Activated CD4-positive, alpha-beta T cell treated with anti-CD3 and anti-CD28 coated beads, Interleukin-2, amount 10 ng/mL, durations not matched to agents 24 days and 14 days (primary cell): ENCODE measurements at regions of chr15 and their contacts with region 1.

Region 1: DNA sequence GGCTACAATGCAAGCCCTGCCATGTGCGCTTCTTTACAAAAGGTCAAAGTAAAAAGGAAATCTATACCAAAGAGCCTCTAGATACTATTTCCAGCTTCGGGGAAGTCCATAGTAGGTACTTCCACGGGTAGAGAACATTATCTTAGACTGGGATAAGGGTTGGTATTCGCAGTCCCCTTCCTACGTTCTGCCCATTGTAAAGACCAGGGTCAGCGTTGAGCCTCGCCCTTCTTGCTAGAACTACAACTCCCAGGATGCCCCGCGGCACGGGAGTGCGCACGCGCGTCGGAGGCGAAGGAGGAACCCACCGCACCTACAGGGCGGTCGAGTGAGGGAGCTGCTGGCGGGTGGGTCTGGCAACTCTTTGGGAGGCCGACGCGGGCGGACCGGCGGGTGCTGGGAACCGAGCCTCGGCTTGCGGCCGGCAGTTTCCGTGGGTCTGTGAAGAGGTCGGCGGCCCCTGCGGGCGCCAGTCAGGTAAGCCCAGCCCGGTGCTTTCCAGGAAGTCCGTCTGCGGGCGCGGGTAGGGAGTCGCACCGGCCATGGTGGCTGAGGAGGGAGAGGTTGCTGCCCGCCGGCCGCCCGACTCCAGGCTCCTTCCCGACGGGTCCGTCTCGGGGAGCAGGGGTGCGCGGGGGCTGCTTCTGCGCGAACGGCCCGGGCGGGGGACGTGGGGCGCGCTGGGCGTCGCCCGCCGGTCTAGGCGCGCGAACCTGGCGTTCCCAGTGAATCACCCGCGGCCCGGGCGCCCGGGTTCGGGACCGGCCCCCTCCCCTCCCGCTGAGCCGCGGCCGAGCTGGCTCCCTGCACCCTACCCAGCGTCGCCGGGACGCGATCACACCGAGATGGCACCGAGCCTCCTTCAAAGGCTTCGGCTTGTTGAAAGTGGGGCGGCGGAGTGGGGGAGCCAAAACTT is at the start of gene TMOD3:
- DNase-seq: peak; percentile 97
- H3K4me3 Mint-ChIP-seq: peak within 1 kb of the TSS; percentile 98
- H3K27ac Mint-ChIP-seq: peak within 1 kb of the TSS; percentile 96
- H3K4me1 Mint-ChIP-seq: peaks cover 36% of the 10 kb centered on the region
- H3K27me3 Mint-ChIP-seq: peaks cover 22% of the 10 kb centered on the region
- total RNA-seq, gene TMOD3: 60.8 and 66.6 TPM in 2 replicates

Region 2: DNA sequence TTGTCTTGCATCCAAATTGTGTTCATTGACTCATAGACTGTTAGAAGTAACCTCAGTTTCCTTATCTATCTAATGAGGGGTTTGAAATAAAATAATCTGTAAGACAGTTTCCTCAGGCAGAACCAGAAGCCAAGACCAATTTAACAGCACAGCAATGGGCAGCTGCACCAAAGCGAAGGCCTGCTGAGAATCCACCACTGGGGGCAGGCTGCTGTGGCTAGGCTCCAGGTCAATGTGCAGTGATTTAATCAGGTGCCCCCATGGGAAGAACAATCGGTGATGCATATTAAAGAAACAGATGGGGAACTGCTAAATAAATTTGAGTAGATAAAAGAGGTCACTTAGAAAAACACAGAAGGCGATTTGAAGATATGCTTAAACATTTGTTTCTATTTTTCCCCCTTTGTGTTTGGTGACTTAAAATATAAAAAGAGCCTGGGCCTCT is 28.2 kb before region 1 on chr15:
- intact Hi-C with region 1: no loop called
- DNase-seq: no peak
- H3K4me3 Mint-ChIP-seq: no peak overlapping the region
- H3K27ac Mint-ChIP-seq: no peak overlapping the region
- H3K4me1 Mint-ChIP-seq: peaks cover 4% of the 10 kb centered on the region
- H3K27me3 Mint-ChIP-seq: no peaks in the 10 kb centered on the region

Region 3: DNA sequence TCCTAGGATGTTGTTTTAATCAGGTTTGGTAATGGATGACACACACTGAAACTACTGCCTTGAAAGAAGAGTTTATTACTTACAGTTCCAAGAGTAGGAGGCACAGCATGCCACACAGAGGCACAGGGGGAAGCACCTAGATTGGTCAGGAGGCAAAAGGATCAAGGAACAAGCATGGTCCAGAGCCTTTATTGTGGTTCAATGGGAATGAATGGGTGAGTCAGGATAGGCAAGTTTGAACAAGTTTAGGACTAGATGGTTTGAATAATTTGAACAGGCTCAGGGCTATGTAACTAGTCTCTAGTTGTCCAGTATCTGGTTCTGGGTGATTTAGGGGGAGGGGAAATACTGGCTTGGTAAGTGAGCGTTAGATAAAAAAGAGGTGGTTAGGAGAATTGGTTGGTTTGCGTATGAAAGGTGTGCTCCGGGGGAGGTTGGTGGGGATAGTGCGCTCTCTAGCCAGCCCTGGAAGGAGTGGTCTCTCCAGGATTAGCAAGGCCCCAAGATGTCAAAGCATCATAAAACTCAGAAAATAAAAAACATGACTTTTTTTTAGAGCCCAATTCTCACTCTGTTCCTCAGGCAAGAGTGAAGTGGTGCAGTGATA is 34.9 kb after region 1 on chr15:
- intact Hi-C with region 1: loop called (anchors 1 kb)
- DNase-seq: no peak
- H3K4me3 Mint-ChIP-seq: peak overlapping the region; percentile 2
- H3K27ac Mint-ChIP-seq: peak overlapping the region; percentile 82
- H3K4me1 Mint-ChIP-seq: peaks cover 47% of the 10 kb centered on the region
- H3K27me3 Mint-ChIP-seq: no peaks in the 10 kb centered on the region

Region 4: GRCh38 chr15:52005748-52006701 is 176.4 kb after region 1 on chr15:
- intact Hi-C with region 1: loop called (anchors 5 kb)
- DNase-seq: peak; percentile 73
- H3K4me3 Mint-ChIP-seq: peak overlapping the region; percentile 51
- H3K27ac Mint-ChIP-seq: peak overlapping the region; percentile 82
- H3K4me1 Mint-ChIP-seq: peaks cover 57% of the 10 kb centered on the region
- H3K27me3 Mint-ChIP-seq: no peaks in the 10 kb centered on the region

Region 5: DNA sequence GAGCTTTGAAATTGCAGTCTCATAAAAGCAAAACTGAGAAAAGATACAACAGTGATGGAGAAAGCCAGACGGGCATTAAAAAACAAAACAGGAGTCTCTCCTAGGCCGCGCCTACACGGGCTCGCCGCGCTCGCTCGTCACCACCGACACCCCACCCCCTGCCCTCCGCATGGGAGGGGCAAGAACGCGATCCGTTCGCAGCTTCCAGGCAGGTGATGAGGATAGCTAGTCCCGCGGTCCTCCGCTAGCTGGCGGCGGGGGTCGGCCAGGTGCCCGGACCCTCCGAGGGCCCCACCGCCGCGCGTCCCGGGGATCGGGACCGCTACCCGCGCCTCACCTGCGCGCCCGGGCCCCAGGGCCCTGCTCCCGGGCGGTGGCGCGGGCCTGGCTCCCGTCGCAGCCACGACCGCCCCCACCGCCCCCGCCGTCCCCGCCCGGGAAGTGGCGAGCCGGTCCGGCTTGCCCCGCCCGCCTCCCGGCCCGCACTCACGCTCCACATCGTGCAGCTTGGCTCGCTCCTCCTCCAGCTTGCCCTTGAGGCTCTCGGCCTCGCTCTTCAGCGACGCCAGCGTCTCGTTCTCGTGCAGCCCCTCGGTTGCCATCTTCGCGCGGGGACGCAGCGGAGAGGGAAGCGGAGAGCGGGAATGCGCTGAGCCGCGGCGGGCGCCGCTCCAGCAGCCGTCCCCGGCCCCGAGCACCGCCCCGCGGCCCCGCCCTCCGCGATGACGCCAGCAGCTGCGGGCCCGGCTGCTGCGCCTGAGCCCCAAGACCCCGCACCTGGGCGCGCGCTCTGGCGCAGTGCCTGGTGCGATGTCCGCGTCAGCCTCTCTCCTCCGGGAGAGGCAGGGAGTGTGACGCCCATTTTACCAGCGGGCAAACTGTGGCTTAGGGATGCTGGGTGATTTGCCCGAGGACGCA is 349.9 kb after region 1 on chr15:
- intact Hi-C with region 1: loop called (anchors 5 kb)
- DNase-seq: peak; percentile 97
- H3K4me3 Mint-ChIP-seq: peak overlapping the region; percentile 87
- H3K27ac Mint-ChIP-seq: peak overlapping the region; percentile 97
- H3K4me1 Mint-ChIP-seq: peaks cover 26% of the 10 kb centered on the region
- H3K27me3 Mint-ChIP-seq: no peaks in the 10 kb centered on the region